ENCODE measurements at regions of chr12 and their contacts with region 1.

Region 1: DNA sequence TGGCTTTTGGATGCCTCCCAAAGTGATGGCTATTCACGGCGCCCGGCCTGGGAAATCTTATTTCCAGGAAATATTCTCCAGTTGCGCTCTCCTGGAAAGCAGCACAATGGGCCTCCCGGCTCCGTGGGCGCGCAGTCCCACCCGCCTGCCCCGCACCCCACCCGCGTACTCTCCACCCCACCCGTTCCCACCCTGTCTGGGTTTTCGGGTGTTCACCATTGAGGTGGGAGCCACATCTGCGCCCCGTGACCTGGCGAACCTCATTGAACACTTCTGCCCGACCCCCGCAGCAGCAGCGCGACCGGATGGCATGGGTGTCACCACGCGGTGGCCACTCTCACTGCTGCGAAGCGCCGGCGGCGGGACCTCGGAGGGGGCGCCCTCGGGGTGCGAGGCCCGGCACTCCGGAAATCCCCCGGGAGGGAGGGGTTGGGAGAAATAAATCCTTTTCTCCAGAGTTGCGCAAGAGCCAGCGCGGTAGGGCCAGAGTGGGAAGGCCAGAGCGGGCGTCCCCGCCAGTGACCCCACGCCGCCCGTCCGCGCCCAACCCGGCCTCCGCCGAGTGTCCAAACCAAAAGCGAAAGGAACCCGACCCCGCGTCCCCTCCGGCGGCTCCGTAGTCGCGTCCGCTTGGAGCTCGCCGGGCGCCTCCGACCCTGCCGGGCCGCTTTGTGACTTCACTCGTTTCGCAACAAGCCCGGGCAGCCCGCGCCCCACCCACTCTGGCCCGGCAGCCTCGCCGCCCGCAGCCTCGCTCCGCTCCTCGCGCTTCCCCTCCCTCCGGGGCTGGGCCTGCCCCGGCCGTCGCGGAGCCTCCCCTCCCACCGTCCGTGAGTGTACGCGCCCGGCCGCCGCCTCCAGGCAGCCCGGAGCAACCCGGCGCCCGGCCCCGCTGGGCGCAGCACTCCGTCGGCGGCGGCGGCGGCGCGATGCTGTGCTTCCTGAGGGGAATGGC is at the start of gene DRAM1:
- DNase-seq: peak; percentile 93
- H3K4me3 ChIP-seq: peak within 1 kb of the TSS; percentile 69 to 97 (median 74)
- H3K27ac ChIP-seq: peak within 1 kb of the TSS; percentile 89
- H3K4me1 ChIP-seq: peaks cover 4% of the 10 kb centered on the region
- H3K27me3 ChIP-seq: no peaks in the 10 kb centered on the region
- CTCF ChIP-seq: peak in 1 of 2 donors; percentile 13
- total RNA-seq, gene DRAM1: 24.1 to 35.2 TPM

Region 2: GRCh38 chr12:101839324-101840283 is 37.5 kb before region 1 on chr12:
- CTCF ChIA-PET with region 1: no interaction called
- dilution Hi-C with region 1: no loop called
- in situ Hi-C with region 1: no loop called
- intact Hi-C with region 1: loop called (anchors 1 kb)
- DNase-seq: peak; percentile 71
- H3K4me3 ChIP-seq: no peak overlapping the region
- H3K27ac ChIP-seq: no peak overlapping the region
- H3K4me1 ChIP-seq: peaks cover 7% of the 10 kb centered on the region
- H3K27me3 ChIP-seq: no peaks in the 10 kb centered on the region
- CTCF ChIP-seq: peak; percentile 78 to 86

Region 3: DNA sequence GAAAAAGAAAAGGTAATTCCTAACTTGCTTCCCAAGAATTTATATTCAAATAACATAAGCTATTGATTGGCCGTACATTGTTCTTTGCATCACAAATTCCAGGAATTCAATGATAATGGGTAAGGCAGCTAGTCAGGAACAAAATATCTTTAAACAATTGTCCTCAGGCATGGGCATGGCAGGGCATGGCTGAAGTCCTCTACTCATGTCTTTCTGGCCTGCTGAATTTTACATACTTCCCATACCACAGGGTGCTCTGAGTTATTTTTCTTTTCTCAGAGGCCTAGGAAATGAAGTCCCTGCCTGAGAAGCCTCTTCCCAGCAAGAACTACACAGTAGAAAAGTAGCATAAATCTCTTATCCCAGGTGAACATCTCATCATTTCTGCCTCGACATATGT is 14.9 kb before region 1 on chr12:
- CTCF ChIA-PET with region 1: interaction called, 3 read pairs
- dilution Hi-C with region 1: no loop called
- in situ Hi-C with region 1: no loop called
- intact Hi-C with region 1: loop called (anchors 2 kb)
- DNase-seq: no peak
- H3K4me3 ChIP-seq: no peak overlapping the region
- H3K27ac ChIP-seq: no peak overlapping the region
- H3K4me1 ChIP-seq: peaks cover 20% of the 10 kb centered on the region
- H3K27me3 ChIP-seq: no peaks in the 10 kb centered on the region
- CTCF ChIP-seq: no peak

Region 4: GRCh38 chr12:101891462-101892273 is 14.5 kb after region 1 on chr12:
- CTCF ChIA-PET with region 1: interaction called, 3 read pairs
- dilution Hi-C with region 1: no loop called
- in situ Hi-C with region 1: no loop called
- intact Hi-C with region 1: loop called (anchors 1 kb)
- DNase-seq: peak; percentile 54
- H3K4me3 ChIP-seq: no peak overlapping the region
- H3K27ac ChIP-seq: no peak overlapping the region
- H3K4me1 ChIP-seq: peaks cover 3% of the 10 kb centered on the region
- H3K27me3 ChIP-seq: no peaks in the 10 kb centered on the region
- CTCF ChIP-seq: no peak

Region 5: GRCh38 chr12:101919447-101919846 is 42.3 kb after region 1 on chr12:
- CTCF ChIA-PET with region 1: no interaction called
- dilution Hi-C with region 1: no loop called
- in situ Hi-C with region 1: no loop called
- intact Hi-C with region 1: loop called (anchors 5 kb)
- DNase-seq: no peak
- H3K4me3 ChIP-seq: no peak overlapping the region
- H3K27ac ChIP-seq: no peak overlapping the region
- H3K4me1 ChIP-seq: no peaks in the 10 kb centered on the region
- H3K27me3 ChIP-seq: no peaks in the 10 kb centered on the region
- CTCF ChIP-seq: no peak

Region 6: GRCh38 chr12:102119674-102120563 is 242.8 kb after region 1 on chr12 and contains the starts of genes NUP37 and PARPBP:
- CTCF ChIA-PET with region 1: no interaction called
- dilution Hi-C with region 1: no loop called
- in situ Hi-C with region 1: no loop called
- intact Hi-C with region 1: no loop called
- DNase-seq: peak; percentile 93
- H3K4me3 ChIP-seq: peak within 1 kb of the TSS; percentile 76 to 91 (median 85)
- H3K27ac ChIP-seq: peak within 1 kb of the TSS; percentile 94
- H3K4me1 ChIP-seq: peaks cover 14% of the 10 kb centered on the region
- H3K27me3 ChIP-seq: no peaks in the 10 kb centered on the region
- CTCF ChIP-seq: peak in 1 of 2 donors; percentile 29
- total RNA-seq, gene NUP37: 18.8 to 47.4 TPM
- total RNA-seq, gene PARPBP: 3.8 to 10.2 TPM